Right ventricle myocardium inferior (tissue), 1 donor: ENCODE measurements at regions of chr2 and their contacts with region 1.

Region 1: GRCh38 chr2:154452906-154453493 is 245.5 kb upstream of the KCNJ3 start:
- DNase-seq: no peak
- ATAC-seq: no peak

Region 2: DNA sequence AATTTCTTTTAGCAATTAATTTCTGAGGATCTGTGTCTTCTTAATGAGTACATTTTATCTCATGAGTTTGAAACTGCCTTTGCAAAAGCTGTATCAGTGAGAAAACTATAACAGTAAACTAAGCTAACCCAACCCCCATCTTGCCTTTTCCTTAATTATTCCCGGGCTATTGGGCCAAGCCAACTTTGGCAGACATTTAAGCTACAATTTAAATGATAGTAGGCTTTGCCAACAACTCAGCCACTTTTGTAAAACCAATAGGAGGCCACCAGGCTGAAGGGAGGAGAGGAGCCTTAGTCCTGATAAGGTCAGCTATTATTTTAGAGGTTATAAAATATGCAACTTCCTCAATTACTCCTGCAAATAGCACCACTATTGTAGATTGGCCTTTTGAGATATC is 27.5 kb after region 1 on chr2:
- intact Hi-C with region 1: no loop called
- DNase-seq: no peak
- ATAC-seq: no peak

Region 3: GRCh38 chr2:154623819-154624218 is 170.8 kb after region 1 on chr2:
- intact Hi-C with region 1: loop called (anchors 5 kb)
- DNase-seq: no peak
- ATAC-seq: no peak

Region 4: GRCh38 chr2:154804451-154804850 is 351.5 kb after region 1 on chr2:
- intact Hi-C with region 1: no loop called
- DNase-seq: no peak
- ATAC-seq: no peak

Region 5: DNA sequence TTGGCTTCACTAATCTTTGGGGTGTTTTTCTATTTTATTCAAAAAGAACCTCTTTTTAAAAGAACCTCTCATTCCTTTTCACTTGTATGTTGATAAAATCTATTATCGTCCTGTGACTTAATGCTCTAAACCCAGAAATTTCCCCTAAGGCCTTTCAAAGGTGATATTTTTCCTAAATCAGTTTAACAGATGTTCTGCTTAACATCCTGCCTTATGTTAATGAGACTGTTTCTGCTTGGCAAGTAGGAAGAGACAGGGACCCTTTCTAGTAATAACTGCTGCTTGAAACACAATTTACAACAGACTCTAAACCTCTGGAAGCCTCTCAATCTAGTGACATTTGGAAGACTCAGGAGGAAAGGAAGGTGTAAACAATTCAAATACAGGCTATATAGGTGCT is 374.3 kb after region 1 on chr2:
- intact Hi-C with region 1: loop called (anchors 10 kb)
- DNase-seq: no peak
- ATAC-seq: no peak